Common myeloid progenitor, CD34-positive (primary cell): ENCODE measurements at regions of chr3 and their contacts with region 1.

Region 1: DNA sequence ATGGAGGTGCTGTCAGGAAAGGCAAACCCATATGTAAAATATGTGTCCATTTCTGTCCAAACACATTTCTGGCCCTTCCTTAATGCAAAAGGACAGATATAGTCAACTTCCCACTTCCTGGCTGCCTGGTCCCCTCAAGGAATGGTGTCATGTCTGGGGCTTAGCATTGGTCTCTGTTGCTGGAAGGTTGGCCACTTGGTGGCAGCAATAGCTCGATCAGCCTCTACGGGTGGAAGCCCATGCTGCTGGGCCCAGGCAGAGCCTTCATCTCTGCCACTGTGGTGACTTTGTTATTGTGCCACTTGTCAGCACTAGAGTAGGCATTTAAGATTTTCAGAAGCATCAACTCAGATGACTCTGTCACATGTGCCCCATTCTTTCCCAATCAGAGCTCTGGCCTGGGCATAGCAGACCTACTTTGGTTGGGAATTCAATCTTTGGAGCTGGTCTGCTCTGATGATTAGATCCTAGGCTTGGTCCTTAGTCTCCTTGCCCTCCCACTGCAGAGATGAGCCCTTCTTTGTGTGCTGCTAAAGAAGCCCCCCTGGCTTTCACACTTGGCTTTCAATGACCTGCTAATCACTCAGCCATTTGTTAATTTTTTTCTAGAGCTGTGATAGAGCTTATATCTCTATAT is 51.0 kb upstream of the SPSB4 start:
- DNase-seq: peak; percentile 49 to 63 (median 59)
- H3K4me3 ChIP-seq: no peak overlapping the region
- H3K27ac ChIP-seq: no peak overlapping the region
- H3K4me1 ChIP-seq: no peaks in the 10 kb centered on the region
- H3K27me3 ChIP-seq: peaks cover 0 to 4% (median 0%) of the 10 kb centered on the region in 5 experiments

Region 2: DNA sequence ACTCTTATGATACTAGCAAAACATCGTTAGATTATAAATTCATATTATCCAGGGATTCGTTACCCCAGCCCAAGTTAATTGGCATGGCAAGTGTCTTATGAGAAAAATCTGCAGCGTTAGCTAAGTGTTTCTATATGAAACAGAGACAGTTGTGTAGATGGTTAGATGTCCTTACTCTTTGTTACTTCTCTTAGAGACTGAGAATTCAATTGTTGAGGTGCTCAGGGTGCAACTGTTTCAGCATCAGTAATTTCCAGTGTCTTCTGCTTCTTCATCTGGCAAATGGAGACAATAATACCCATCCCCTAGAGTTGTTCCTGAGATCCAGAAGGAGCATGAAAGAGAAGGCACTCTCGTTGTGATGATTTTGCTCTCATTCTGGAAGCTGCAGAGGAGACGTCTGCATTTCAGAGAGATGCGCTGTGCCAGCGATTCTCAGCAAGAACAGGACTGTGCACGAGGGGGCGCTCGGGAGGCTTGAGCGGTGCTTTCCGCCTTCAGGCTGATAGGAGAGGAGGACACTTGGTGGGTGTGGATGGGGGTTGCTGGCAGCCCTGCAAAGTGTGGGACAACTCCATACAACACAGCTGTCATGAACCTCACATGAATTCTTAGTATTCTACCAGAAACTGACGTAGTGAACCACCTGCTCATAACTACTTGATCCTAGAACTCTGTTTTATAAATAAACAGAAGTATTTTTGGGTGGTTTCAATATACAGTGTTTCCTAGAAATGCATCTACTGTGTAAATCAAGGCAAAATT is 11.3 kb after region 1 on chr3:
- CTCF ChIA-PET with region 1: interaction called, 43 read pairs
- POLR2A ChIA-PET with region 1: no interaction called
- DNase-seq: peak; percentile 65 to 85 (median 82)
- H3K4me3 ChIP-seq: no peak overlapping the region
- H3K27ac ChIP-seq: no peak overlapping the region
- H3K4me1 ChIP-seq: peaks cover 0 to 4% (median 0%) of the 10 kb centered on the region in 4 experiments
- H3K27me3 ChIP-seq: peaks cover 0 to 2% (median 0%) of the 10 kb centered on the region in 5 experiments

Region 3: DNA sequence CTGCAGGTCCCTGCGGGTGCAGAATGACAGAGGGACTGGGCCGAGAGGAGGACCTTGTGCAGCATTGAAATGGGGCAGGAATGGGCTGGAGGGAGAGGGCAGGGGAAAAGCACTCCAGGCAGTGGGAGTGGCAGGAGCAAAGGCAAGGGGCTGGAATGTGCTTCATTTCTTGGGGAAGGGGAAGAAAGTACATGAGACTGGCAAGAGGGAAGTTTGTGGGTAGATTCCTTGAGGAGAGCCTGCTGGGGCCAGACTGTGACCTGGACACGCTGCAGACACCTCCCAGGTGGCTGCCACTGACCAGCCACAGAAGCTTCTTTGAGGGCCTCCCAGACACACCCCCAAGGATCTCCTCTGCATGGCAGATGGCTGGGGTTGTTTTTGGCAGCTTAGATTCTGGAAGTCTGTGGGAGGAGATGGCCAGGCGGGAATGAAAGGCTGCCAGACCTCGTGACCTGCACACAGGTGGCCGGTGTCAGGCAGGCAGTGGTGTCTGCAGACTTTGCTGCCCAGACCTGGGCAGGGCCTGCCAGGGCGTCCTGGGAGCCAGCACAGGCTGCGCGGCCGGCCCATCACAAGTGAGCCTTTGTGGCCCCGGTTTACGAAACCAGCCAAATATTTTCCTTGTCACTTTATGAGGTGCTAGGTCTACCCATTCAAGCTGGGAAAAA is 104.1 kb after region 1 on chr3:
- CTCF ChIA-PET with region 1: interaction called, 12 read pairs
- POLR2A ChIA-PET with region 1: no interaction called
- DNase-seq: no peak
- H3K4me3 ChIP-seq: no peak overlapping the region
- H3K27ac ChIP-seq: no peak overlapping the region
- H3K4me1 ChIP-seq: no peaks in the 10 kb centered on the region
- H3K27me3 ChIP-seq: no peaks in the 10 kb centered on the region

Region 4: DNA sequence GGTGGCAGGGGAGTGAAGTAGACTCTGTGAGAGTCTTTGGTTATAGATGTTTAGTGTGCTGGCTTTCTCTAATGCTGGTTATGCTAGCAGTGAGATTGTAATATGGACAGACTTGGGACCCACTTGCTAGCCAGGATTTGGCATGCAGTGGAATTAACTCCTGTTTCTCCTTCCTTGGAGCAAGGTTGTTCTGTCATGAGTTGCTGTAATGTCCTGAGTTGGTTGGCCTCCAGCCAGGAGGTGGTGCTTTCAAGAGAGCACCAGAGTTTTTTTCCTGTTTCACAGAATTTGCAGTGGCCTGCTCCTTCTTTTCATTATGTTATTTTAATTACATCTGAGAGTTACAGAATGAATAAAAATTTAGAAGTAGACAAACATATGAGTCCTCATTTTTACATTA is 143.4 kb after region 1 on chr3:
- CTCF ChIA-PET with region 1: no interaction called
- POLR2A ChIA-PET with region 1: no interaction called
- DNase-seq: no peak
- H3K4me3 ChIP-seq: no peak overlapping the region
- H3K27ac ChIP-seq: no peak overlapping the region
- H3K4me1 ChIP-seq: no peaks in the 10 kb centered on the region
- H3K27me3 ChIP-seq: no peaks in the 10 kb centered on the region

Region 5: DNA sequence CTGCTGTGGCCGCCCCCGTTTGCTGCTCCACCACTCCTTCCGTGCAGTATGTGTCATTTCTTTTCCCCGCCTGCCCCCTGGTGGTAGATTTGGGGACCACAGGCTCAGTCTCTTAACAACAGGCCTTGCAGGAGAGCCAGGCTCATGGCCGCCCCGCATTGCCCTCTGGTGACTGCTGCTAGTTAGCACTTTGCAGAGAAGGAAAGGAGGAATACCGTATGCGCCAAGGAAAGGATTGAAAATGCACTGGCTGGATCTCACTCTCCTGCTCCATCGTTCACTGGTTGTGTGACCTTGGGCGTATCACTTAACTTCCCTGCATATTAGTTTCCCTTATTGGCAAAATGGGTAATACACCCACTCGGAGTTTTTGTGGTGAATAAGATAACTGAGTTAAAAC is 192.2 kb after region 1 on chr3:
- CTCF ChIA-PET with region 1: interaction called, 44 read pairs
- POLR2A ChIA-PET with region 1: no interaction called
- DNase-seq: peak; percentile 93 to 96 (median 93)
- H3K4me3 ChIP-seq: no peak overlapping the region
- H3K27ac ChIP-seq: no peak overlapping the region
- H3K4me1 ChIP-seq: peaks cover 0 to 6% (median 1%) of the 10 kb centered on the region in 4 experiments
- H3K27me3 ChIP-seq: peaks cover 0 to 4% (median 0%) of the 10 kb centered on the region in 5 experiments